HEK293T (cell line): ENCODE measurements at regions of chr1 and their contacts with region 1.

Region 1: GRCh38 chr1:183234660-183235476 is 48.8 kb downstream of the LAMC2 start:
- DNase-seq: peak; percentile 88

Region 2: GRCh38 chr1:183025782-183026774 is 208.8 kb before region 1 on chr1:
- CTCF ChIA-PET with region 1: interaction called, 9 read pairs
- POLR2A ChIA-PET with region 1: interaction called, 11 read pairs
- DNase-seq: peak; percentile 55

Region 3: GRCh38 chr1:183218971-183219615 is 15.8 kb before region 1 on chr1:
- CTCF ChIA-PET with region 1: interaction called, 25 read pairs
- POLR2A ChIA-PET with region 1: interaction called, 14 read pairs
- DNase-seq: no peak

Region 4: GRCh38 chr1:183247066-183247465 is 12.2 kb after region 1 on chr1:
- CTCF ChIA-PET with region 1: interaction called, 11 read pairs
- POLR2A ChIA-PET with region 1: interaction called, 3 read pairs
- DNase-seq: no peak